Activated CD8-positive, alpha-beta T cell treated with anti-CD3 and anti-CD28 coated beads for 36 hours (primary cell): ENCODE measurements at regions of chr20 and their contacts with region 1.

Region 1: GRCh38 chr20:50790651-50791277 is 4.1 kb upstream of the BCAS4 start:
- DNase-seq: peak; percentile 88
- ATAC-seq: peak; percentile 75
- H3K4me3 Mint-ChIP-seq: no peak overlapping the region
- H3K27ac Mint-ChIP-seq: peak overlapping the region; percentile 79
- H3K4me1 Mint-ChIP-seq: peaks cover 9% of the 10 kb centered on the region
- H3K27me3 Mint-ChIP-seq: no peaks in the 10 kb centered on the region
- CTCF ChIP-seq: peak; percentile 78

Region 2: DNA sequence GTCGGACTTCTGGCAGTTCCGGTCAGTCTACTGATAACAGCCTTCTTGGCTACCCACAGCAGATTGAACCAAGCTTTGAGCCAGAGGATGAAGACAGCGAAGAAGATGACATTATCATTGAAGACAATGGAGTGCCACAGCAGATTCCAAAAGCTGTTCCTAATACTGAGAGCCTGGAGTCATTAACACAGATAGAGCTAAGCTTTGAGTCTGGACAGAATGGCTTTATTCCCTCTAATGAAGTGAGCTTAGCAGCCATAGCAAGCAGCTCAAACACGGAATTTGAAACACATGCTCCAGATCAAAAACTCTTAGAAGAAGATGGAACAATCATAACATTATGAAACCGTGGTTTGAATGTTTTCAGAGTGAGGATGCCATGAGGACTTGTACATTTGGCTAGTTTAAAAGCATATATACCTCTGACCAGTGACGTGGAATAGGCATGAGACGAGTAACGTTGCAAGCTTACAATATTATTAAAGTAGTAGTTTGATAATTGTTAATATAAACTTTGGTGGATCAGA is 40.6 kb before region 1 on chr20:
- CTCF ChIA-PET with region 1: interaction called, 16 read pairs
- POLR2A ChIA-PET with region 1: interaction called, 3 read pairs
- intact Hi-C with region 1: no loop called
- DNase-seq: no peak
- ATAC-seq: no peak
- H3K4me3 Mint-ChIP-seq: no peak overlapping the region
- H3K27ac Mint-ChIP-seq: no peak overlapping the region
- H3K4me1 Mint-ChIP-seq: peaks cover 20% of the 10 kb centered on the region
- H3K27me3 Mint-ChIP-seq: no peaks in the 10 kb centered on the region
- CTCF ChIP-seq: no peak

Region 3: DNA sequence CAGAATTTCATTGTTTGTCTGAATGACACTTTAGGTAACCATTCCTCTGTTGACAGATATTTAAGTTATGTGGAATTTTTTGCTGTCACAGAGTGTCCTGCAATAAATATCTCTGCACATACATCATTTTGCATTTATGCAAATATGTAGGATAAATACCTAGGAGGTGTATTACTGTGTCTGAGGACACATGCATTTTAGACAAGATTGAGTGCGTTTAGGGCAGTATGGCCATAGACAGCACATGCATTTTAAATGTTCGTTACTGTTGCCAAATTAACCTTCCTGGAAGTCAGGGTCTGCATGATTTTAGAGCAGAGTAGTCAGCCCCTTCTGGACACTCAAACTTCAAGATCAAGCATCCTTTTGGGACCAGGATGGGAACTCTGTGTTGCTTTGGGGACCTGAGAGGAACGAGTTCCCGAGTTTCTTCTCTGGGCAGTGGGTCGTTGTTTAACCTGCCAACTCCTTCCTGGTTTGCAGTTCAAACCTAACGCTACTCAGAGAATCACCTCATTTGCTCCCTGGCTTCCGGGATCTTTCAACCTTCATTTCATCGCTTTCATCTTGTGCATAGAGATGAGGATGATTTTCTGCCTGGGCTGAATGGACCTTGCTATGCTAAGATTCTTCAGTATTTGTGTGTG is 13.8 kb after region 1 on chr20:
- CTCF ChIA-PET with region 1: interaction called, 15 read pairs
- POLR2A ChIA-PET with region 1: interaction called, 11 read pairs
- intact Hi-C with region 1: no loop called
- DNase-seq: peak; percentile 55
- ATAC-seq: peak; percentile 88
- H3K4me3 Mint-ChIP-seq: peak overlapping the region; percentile 69
- H3K27ac Mint-ChIP-seq: peak overlapping the region; percentile 95
- H3K4me1 Mint-ChIP-seq: peaks cover 39% of the 10 kb centered on the region
- H3K27me3 Mint-ChIP-seq: no peaks in the 10 kb centered on the region
- CTCF ChIP-seq: no peak

Region 4: GRCh38 chr20:50844430-50845100 is 53.8 kb after region 1 on chr20:
- CTCF ChIA-PET with region 1: interaction called, 30 read pairs
- POLR2A ChIA-PET with region 1: interaction called, 3 read pairs
- intact Hi-C with region 1: no loop called
- DNase-seq: peak; percentile 92
- ATAC-seq: peak; percentile 99
- H3K4me3 Mint-ChIP-seq: peak overlapping the region; percentile 10
- H3K27ac Mint-ChIP-seq: peak overlapping the region; percentile 87
- H3K4me1 Mint-ChIP-seq: peaks cover 18% of the 10 kb centered on the region
- H3K27me3 Mint-ChIP-seq: no peaks in the 10 kb centered on the region
- CTCF ChIP-seq: no peak

Region 5: DNA sequence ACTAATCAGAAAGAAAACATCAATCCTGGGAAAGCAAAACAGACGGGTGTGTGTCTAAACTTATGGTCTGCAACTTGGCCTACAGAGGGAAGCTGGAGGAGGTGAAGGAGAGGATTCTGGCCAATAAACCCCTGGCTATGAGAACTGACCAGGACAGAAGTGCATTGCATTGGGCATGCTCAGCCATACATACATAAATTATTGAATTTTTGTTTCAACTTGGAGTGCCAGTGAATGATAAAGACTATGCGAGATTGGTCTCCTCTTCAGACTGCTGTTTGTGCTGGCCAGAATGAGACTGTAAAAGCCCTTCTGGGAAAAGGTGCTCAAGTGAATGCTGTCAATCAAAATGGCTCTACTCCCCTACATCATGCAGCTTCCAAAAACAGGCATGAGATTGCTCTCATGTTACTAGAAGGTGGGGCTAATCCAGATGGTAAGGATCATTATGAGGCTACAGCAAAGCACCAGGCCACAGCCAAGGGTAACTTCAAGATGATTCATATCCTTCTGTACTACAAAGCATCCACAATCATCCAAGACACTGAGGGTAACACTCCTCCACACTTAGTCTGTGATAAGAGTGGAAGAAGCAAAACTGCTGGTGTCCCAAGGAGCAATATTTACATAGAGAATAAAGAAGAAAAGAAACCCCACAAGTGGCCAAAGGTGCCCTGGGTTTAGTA is 123.1 kb after region 1 on chr20:
- CTCF ChIA-PET with region 1: interaction called, 17 read pairs
- POLR2A ChIA-PET with region 1: interaction called, 7 read pairs
- intact Hi-C with region 1: no loop called
- DNase-seq: peak; percentile 60
- ATAC-seq: peak; percentile 96
- H3K4me3 Mint-ChIP-seq: no peak overlapping the region
- H3K27ac Mint-ChIP-seq: peak overlapping the region; percentile 17
- H3K4me1 Mint-ChIP-seq: peaks cover 83% of the 10 kb centered on the region
- H3K27me3 Mint-ChIP-seq: no peaks in the 10 kb centered on the region
- CTCF ChIP-seq: no peak

Region 6: GRCh38 chr20:50958615-50959542 is 168.1 kb after region 1 on chr20 and contains the start of gene MOCS3:
- CTCF ChIA-PET with region 1: interaction called, 23 read pairs
- POLR2A ChIA-PET with region 1: interaction called, 12 read pairs
- intact Hi-C with region 1: no loop called
- DNase-seq: peak; percentile 85
- ATAC-seq: peak; percentile 84
- H3K4me3 Mint-ChIP-seq: peak within 1 kb of the TSS; percentile 96
- H3K27ac Mint-ChIP-seq: peak within 1 kb of the TSS; percentile 100
- H3K4me1 Mint-ChIP-seq: peaks cover 48% of the 10 kb centered on the region
- H3K27me3 Mint-ChIP-seq: no peaks in the 10 kb centered on the region
- CTCF ChIP-seq: no peak
- total RNA-seq, gene MOCS3: 4.6 TPM

Region 7: GRCh38 chr20:50987592-50988210 is 196.9 kb after region 1 on chr20:
- CTCF ChIA-PET with region 1: interaction called, 19 read pairs
- POLR2A ChIA-PET with region 1: no interaction called
- intact Hi-C with region 1: no loop called
- DNase-seq: peak; percentile 70
- ATAC-seq: peak; percentile 98
- H3K4me3 Mint-ChIP-seq: no peak overlapping the region
- H3K27ac Mint-ChIP-seq: no peak overlapping the region
- H3K4me1 Mint-ChIP-seq: no peaks in the 10 kb centered on the region
- H3K27me3 Mint-ChIP-seq: peaks cover 20% of the 10 kb centered on the region
- CTCF ChIP-seq: peak; percentile 89